Cardiac septum (tissue), 1 donor: ENCODE measurements at regions of chrX and their contacts with region 1.

Region 1: DNA sequence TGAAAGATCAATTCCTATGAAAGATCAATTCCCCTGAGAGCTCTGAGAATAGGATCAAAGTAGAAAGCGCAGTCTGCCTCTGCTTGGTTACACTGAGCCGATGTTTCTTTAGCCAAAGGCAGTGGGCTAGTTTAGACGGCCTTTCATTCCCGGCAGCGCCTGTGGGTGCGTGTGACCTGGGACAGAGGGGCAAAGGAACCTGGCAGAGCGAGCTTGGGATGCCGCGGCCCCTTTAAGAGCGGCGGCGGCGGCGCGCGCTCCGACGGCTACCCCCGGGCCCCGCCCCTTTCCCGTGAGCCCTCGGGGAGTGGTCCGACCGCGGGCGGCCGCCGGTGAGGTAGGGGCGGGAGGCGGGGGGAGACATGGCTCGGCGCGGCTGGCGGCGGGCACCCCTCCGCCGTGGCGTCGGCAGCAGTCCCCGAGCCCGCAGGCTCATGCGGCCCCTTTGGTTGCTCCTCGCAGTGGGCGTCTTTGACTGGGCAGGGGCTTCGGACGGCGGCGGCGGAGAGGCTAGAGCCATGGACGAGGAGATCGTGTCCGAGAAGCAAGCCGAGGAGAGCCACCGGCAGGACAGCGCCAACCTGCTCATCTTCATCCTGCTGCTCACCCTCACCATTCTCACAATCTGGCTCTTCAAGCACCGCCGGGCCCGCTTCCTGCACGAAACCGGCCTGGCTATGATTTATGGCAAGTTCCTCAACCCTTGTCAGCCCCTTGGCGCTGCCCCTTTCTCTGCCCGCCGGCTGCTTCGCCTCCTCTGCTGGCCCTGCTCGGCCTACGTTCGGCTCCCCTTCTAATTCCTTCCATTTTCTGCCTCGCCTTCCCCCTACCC is at the start of gene SLC9A6:
- DNase-seq: peak; percentile 87
- total RNA-seq, gene SLC9A6: 12.5 TPM

Region 2: DNA sequence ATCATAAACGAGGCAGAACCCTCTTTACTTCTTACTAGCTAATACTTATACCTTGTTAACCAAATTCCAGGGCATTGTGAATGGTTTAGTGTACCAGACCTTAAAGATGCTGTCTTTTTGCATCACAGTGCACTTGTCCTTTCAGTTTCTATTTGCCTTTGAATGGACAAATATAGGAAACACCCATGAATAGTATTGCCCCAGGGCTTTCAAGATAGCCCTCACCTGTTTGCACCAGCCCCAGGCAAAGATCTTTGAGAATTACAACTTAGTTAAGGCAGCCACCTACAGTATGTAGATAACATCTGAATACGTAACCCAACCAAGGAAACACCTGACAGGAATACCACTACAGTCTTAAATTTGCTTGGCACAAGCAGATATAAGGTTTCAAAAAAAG is 332.7 kb before region 1 on chrX:
- intact Hi-C with region 1: no loop called
- DNase-seq: no peak

Region 3: GRCh38 chrX:136097871-136098805 is 112.8 kb after region 1 on chrX:
- intact Hi-C with region 1: no loop called
- DNase-seq: no peak

Region 4: DNA sequence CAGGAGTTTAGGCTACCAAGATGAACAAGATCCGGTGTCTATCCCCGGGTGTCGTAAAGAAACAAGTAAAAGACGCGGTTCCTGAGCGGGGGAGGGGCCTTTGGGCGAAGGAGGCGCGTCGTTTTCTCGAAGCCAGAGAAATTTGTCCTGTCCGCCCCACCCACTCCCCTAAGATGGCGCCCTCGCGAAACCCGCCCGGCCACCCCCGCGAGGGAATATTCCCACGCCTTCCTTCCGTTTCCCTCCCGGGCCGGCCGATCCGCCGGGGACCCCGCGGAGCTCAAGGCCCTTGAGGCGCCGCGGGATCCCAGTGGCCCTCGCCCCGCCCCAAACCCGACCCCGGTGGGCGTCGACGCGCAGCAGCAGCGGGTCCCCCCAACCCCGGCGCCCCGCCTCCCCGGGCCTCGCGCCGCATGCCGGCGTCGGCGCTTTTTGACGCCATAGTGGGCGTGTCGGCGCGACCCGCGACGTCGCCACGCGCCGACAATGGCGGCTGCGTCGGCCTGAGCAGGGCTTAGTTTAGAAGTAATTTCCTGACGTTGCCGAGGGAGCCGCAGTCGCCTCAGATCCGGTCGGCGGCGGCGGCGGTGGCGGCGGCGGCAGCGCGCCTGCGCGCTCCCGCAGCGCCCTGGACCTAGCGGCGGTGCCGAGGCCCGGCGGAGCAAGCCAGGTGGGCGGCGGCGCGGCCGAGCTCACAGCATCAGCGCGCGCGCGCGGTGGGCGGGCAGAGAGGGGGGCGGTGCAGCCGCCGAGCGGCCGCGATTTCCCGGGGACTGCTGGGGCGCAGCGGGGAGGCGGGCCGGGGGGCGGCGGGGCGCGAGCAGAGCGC is 511.6 kb after region 1 on chrX and contains the start of gene HTATSF1:
- intact Hi-C with region 1: loop called (anchors 5 kb)
- DNase-seq: peak; percentile 91
- total RNA-seq, gene HTATSF1: 66.2 TPM